K562 (cell line): ENCODE measurements at regions of chr10 and their contacts with region 1.

Region 1: DNA sequence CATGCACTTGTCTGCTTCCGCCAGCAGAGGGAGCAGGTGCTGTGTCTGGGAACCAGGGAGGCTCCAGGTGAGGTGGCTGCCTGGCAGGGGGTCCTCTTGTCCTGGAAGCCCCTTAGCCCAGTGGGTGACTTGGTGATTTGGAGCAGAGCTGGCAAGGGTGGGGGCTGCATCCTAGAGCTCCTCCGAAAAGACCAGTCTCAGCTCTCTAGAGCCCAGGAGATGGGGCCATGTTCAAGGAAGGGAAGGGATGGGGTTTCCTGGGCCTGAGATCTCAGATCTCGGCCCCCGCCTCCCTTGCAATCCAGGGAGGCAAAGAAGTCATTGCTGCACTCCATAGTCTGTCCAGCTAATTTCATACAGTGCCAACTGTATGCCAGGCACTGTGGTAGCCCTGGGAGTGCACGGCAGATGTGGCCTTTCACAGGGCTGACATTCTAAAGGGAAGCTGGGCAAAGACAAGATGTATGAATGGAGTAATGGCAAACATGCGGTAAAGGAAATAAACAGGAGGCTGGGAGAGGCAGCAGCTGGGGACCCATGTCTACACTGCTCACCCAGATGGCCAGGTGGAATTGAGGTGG is 20.4 kb upstream of the SFRP5 start:
- DNase-seq: peak; percentile 66 to 77 (median 72)
- ATAC-seq: no peak; the same call in 2 of the 3 replicates
- H3K4me3 ChIP-seq: no peak overlapping the region
- H3K27ac ChIP-seq: no peak overlapping the region
- H3K4me1 ChIP-seq: peaks cover 32 to 45% of the 10 kb centered on the region in 2 experiments; a peak in 4 of 5 replicates
- H3K27me3 ChIP-seq: no peaks in the 10 kb centered on the region
- CTCF ChIP-seq: peak; percentile 79 to 89 (median 81)
- EP300 ChIP-seq: no peak
- POLR2A ChIP-seq: no peak
- RAD21 ChIP-seq: peak; percentile 72 to 84

Region 2: GRCh38 chr10:97771055-97771811 is 21.0 kb before region 1 on chr10:
- CTCF ChIA-PET with region 1: no interaction called
- POLR2A ChIA-PET with region 1: no interaction called
- in situ Hi-C with region 1: no loop called
- intact Hi-C with region 1: no loop called
- DNase-seq: peak in 1 of 4 experiments; percentile 38
- ATAC-seq: peak; percentile 24; the same call in 2 of the 3 replicates
- H3K4me3 ChIP-seq: no peak overlapping the region
- H3K27ac ChIP-seq: no peak overlapping the region
- H3K4me1 ChIP-seq: peaks cover 7 to 26% of the 10 kb centered on the region in 2 experiments; a peak in 4 of 5 replicates
- H3K27me3 ChIP-seq: peaks cover 0 to 5% of the 10 kb centered on the region in 2 experiments; a peak in 1 of 5 replicates
- CTCF ChIP-seq: no peak
- EP300 ChIP-seq: no peak
- POLR2A ChIP-seq: no peak
- RAD21 ChIP-seq: no peak

Region 3: DNA sequence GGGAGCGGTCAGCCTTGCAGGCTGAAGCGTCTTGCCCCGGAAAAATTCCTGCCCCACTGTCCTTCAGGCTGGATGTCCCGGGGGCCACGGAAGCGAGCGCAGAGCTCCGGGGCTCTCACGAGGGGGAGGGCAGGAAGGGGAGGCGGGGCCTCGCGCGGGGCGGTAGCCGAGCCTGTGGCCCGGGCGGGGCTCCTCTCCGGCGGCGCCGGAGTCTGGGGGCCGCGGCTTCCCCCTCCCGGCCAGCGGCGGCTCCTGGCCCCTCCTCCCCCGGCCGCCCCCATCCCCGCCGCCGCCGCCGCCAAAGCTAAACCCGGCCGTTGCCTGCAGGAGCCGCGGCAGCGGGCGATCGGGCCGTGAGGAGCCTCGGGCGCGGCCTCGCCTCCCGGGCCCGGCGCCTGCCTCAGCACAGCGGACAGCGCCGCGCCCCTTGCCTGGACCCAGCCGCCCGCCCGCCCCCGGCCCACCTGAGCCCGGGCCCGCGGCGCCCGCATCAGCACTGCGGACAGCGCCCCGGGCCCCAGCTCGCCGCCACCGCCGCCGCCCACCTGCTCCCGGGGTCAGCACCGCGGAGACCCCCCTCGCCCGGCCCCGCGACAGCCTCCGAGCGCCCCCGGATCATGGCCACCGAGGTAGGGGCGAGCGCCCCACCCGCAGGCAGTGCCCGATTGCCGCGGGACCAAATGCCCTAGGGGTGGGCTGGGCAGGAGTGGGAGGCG is 57.6 kb after region 1 on chr10 and contains the start of gene GOLGA7B:
- CTCF ChIA-PET with region 1: interaction called, 3 read pairs
- POLR2A ChIA-PET with region 1: no interaction called
- in situ Hi-C with region 1: no loop called
- intact Hi-C with region 1: loop called (anchors 5 kb)
- DNase-seq: peak; percentile 42 to 86 (median 79)
- ATAC-seq: peak; percentile 95
- H3K4me3 ChIP-seq: peak within 1 kb of the TSS; percentile 45
- H3K27ac ChIP-seq: no peak within 1 kb of the TSS
- H3K4me1 ChIP-seq: peaks cover 0 to 9% of the 10 kb centered on the region in 2 experiments; a peak in 2 of 5 replicates
- H3K27me3 ChIP-seq: peaks cover 0 to 13% of the 10 kb centered on the region in 2 experiments; a peak in 2 of 5 replicates
- CTCF ChIP-seq: no peak
- EP300 ChIP-seq: no peak
- POLR2A ChIP-seq: no peak
- RAD21 ChIP-seq: no peak
- polyA plus RNA-seq, gene GOLGA7B: not detected

Region 4: DNA sequence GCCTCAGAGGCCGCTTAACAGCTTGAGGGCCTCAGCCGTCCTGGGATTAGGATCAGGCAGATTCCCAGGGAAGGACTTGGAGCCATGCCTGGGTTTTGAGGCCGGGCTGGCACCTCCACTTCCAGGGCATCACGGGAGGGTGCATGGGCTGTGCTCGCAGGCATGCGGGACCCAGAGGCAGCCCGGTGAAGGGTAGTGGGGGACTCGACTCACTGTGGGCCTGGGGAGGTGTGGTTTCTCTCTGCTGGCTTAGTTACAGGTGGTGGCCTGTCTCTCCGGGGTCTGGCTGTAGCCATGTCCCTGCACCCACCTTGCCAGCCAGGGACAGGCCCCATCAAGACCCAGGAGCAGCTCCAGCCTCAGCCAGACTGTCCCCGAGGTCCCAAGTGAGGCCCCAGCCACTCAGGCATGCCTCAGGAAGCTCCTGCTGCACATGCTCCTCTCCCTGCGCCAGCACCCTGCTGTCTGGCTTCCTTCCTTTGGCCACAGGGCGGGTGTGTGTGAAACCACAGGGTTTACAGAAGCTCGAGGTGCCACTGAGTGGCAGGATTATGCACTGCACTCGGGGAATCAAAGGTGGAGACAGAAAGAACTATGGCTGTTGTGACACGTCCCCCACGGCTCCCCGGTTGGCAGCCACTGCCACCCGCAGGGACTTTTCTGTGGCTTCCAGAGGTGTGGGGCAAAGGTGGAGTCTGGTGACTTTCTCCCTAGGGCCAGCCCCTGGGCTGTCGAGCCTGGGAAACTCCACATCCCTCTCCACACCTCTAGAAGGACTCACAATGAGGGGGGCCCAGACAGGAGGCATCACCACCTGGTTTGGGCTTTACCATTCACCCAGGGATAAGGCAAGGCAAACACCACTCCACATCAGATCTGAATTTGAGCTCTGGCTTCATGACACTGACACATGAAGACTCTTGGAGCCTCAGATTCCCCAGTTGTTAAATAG is 77.1 kb after region 1 on chr10:
- CTCF ChIA-PET with region 1: interaction called, 7 read pairs
- POLR2A ChIA-PET with region 1: no interaction called
- in situ Hi-C with region 1: no loop called
- intact Hi-C with region 1: loop called (anchors 1 kb)
- DNase-seq: peak; percentile 69 to 81 (median 75)
- ATAC-seq: peak; percentile 99
- H3K4me3 ChIP-seq: no peak overlapping the region
- H3K27ac ChIP-seq: no peak overlapping the region
- H3K4me1 ChIP-seq: peaks cover 5 to 16% of the 10 kb centered on the region in 2 experiments; a peak in 3 of 5 replicates
- H3K27me3 ChIP-seq: peaks cover 7 to 44% of the 10 kb centered on the region in 2 experiments; a peak in 4 of 5 replicates
- CTCF ChIP-seq: peak; percentile 81 to 97 (median 96)
- EP300 ChIP-seq: no peak
- POLR2A ChIP-seq: no peak
- RAD21 ChIP-seq: peak; percentile 93 to 95